Left cardiac atrium (tissue), 4 donors: ENCODE measurements at regions of chr3 and their contacts with region 1.

Region 1: DNA sequence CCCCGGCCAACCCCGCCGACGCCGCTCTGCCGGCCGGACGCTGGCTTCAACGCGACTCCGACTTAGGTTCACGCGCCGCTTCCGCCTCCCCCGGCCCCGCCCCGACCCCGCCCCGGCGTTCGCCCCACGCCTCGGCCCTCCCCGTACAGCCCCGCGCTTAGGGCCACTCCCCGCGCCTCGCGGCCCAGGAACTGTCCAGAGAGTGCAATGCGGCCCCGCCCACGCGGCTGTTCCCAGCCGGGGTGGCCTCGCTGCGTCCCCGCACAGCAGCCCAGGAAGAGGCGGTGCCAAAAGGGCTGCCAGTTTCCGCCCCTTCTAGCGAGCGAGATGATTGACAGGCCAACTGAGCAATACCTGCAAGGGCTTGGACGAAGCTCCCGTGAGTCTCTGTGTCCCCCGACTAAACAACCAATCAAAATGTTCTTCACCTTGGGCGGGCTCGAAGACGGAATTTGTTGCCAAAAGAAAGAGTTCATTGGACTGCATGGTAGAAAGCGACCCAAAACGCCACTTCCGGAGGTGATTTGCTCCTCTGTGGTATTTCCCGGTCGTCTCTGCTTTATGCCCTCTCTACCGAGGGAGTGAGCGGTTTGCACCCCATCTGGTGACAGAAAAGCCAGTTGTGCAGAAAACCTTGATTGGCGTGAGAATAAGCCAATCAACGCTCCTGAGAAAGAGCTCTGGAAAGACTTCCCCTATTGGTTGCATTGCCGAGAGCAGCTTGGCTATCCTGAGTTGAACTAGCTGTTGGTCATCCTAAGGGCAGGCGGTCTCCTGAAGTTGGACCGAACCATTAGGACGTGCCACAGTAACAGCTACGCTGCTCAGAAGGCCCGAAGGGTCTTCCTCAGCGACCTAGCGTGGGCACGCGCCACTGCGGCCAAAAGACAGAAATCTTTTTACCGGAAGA is at the start of gene UBP1:
- DNase-seq: peak; percentile 100
- ATAC-seq: peak; percentile 95 to 96
- total RNA-seq, gene UBP1: 38.7 to 47.6 TPM

Region 2: DNA sequence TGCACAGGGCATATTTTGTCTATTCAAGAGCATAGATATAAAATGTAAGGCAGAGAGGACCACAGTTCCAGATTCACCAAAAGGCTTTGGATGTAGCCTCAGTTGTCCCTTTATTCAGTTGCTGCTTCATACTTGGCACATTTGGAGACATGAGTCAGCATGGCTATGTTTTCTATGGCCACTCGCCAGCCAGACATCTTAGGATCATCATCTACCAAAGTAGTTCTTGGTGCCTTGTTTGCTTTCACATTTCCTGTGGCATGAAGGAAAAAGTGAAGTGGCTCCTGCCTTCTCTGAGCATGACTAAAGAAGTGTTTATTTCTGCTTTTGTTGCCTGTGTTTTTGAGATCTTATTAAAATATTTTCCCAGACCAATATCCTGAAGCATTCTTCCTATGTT is 229.1 kb before region 1 on chr3:
- intact Hi-C with region 1: no loop called
- DNase-seq: no peak
- ATAC-seq: no peak

Region 3: GRCh38 chr3:33537133-33537532 is 96.6 kb after region 1 on chr3:
- intact Hi-C with region 1: loop called in 1 of 2 experiments (anchors 5 kb)
- DNase-seq: no peak
- ATAC-seq: peak; percentile 62 to 78